ENCODE measurements at regions of chr7 and their contacts with region 1.

Region 1: GRCh38 chr7:80392229-80393169 is 119.4 kb downstream of the GNAT3 start:
- DNase-seq: peak; percentile 60
- ATAC-seq: peak; percentile 53; the same call in 1 of the 2 replicates
- H3K4me3 ChIP-seq: no peak overlapping the region
- H3K27ac ChIP-seq: no peak overlapping the region
- H3K4me1 ChIP-seq: no peaks in the 10 kb centered on the region
- H3K27me3 ChIP-seq: no peaks in the 10 kb centered on the region
- CTCF ChIP-seq: peak; percentile 59
- POLR2A ChIP-seq: no peak
- RAD21 ChIP-seq: peak; percentile 70

Region 2: GRCh38 chr7:80060218-80060806 is 332.2 kb before region 1 on chr7:
- CTCF ChIA-PET with region 1: no interaction called
- POLR2A ChIA-PET with region 1: no interaction called
- dilution Hi-C with region 1: no loop called
- in situ Hi-C with region 1: loop called (anchors 5 kb)
- intact Hi-C with region 1: loop called (anchors 2 kb)
- DNase-seq: peak; percentile 82
- ATAC-seq: peak; percentile 59; the same call in 1 of the 2 replicates
- H3K4me3 ChIP-seq: no peak overlapping the region
- H3K27ac ChIP-seq: no peak overlapping the region
- H3K4me1 ChIP-seq: peaks cover 2% of the 10 kb centered on the region; the same call in 1 of the 2 replicates
- H3K27me3 ChIP-seq: no peaks in the 10 kb centered on the region
- CTCF ChIP-seq: peak; percentile 65
- POLR2A ChIP-seq: no peak
- RAD21 ChIP-seq: peak; percentile 60

Region 3: GRCh38 chr7:80095545-80095944 is 297.0 kb before region 1 on chr7:
- CTCF ChIA-PET with region 1: no interaction called
- POLR2A ChIA-PET with region 1: no interaction called
- dilution Hi-C with region 1: no loop called
- in situ Hi-C with region 1: no loop called
- intact Hi-C with region 1: loop called (anchors 1 kb)
- DNase-seq: peak; percentile 29
- ATAC-seq: no peak; the same call in 1 of the 2 replicates
- H3K4me3 ChIP-seq: no peak overlapping the region
- H3K27ac ChIP-seq: no peak overlapping the region
- H3K4me1 ChIP-seq: no peaks in the 10 kb centered on the region; the same call in 1 of the 2 replicates
- H3K27me3 ChIP-seq: no peaks in the 10 kb centered on the region
- CTCF ChIP-seq: peak; percentile 56
- POLR2A ChIP-seq: no peak
- RAD21 ChIP-seq: peak; percentile 44

Region 4: GRCh38 chr7:80225361-80225760 is 167.1 kb before region 1 on chr7:
- CTCF ChIA-PET with region 1: no interaction called
- POLR2A ChIA-PET with region 1: no interaction called
- dilution Hi-C with region 1: no loop called
- in situ Hi-C with region 1: no loop called
- intact Hi-C with region 1: loop called (anchors 5 kb)
- DNase-seq: no peak
- ATAC-seq: no peak; the same call in 1 of the 2 replicates
- H3K4me3 ChIP-seq: no peak overlapping the region
- H3K27ac ChIP-seq: no peak overlapping the region
- H3K4me1 ChIP-seq: no peaks in the 10 kb centered on the region; the same call in 1 of the 2 replicates
- H3K27me3 ChIP-seq: no peaks in the 10 kb centered on the region
- CTCF ChIP-seq: no peak
- POLR2A ChIP-seq: no peak
- RAD21 ChIP-seq: no peak

Region 5: DNA sequence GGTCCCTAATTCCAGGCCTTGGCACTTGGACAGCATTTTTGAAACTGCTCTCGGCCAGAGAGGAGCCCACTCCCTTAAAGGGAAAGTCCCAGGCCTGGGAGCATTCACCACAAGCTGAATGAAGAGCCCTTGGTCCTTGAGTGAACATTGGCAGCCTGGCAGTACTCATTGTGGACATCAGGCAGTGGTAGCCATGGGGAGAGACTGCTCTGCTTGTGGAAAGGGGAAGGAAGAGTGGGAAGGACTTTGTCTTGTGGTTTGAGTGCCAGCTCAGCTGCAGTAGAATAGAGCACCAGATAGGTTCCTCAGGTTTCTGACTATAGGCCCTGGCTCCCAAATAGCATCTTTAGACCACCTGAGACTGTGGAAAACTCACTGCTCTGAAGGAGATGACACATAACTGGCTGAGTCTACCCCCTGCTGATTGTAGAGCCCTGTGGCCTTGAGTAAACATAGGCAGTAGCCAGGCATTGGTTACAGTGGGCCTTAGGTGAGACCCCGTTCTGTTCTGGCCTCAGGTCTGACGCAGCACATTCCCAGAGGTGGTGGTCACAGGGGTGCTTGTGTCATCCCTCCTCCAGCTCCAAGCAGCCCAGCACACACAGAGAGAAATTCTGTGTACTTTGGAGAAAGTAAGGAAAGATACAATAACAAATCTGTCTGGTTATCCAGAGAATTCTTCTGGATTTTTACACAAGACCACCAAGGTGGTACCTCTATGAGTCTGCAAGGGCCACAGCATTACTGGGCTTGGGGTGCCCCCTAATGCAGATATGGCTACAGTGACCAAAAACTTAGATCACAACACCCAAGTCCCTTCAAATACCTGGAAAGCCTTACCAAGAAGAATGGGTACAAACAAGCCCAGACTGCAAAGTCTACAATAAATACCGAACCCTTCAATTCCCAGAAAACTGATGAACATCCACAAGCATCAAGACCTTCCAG is 104.0 kb before region 1 on chr7:
- CTCF ChIA-PET with region 1: no interaction called
- POLR2A ChIA-PET with region 1: no interaction called
- dilution Hi-C with region 1: no loop called
- in situ Hi-C with region 1: no loop called
- intact Hi-C with region 1: loop called (anchors 5 kb)
- DNase-seq: peak; percentile 84
- ATAC-seq: peak; percentile 65
- H3K4me3 ChIP-seq: no peak overlapping the region
- H3K27ac ChIP-seq: no peak overlapping the region
- H3K4me1 ChIP-seq: no peaks in the 10 kb centered on the region
- H3K27me3 ChIP-seq: no peaks in the 10 kb centered on the region; the same call in 1 of the 2 replicates
- CTCF ChIP-seq: peak; percentile 29; the same call in 1 of the 2 replicates
- POLR2A ChIP-seq: no peak
- RAD21 ChIP-seq: no peak

Region 6: DNA sequence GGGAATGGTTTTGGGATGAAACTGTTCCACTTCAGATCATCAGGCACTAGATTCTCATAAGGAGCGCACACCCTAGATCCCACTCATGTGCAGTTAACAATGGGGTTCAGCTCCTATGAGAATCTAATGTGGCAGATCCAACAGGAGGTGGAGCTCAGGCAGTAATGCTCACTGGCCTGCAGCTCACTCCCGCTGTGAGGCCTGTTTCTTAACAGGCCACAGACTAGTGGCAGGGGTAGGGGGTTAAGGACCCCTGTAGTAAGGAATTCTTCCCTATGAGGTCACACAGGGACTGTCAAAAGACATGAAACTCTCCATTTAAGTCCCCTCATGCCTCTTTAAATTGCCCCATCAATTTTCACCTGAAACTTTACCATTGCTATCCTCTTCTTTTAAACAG is 1369.3 kb after region 1 on chr7:
- CTCF ChIA-PET with region 1: no interaction called
- POLR2A ChIA-PET with region 1: interaction called, 10 read pairs
- dilution Hi-C with region 1: no loop called
- in situ Hi-C with region 1: no loop called
- intact Hi-C with region 1: no loop called
- DNase-seq: no peak
- ATAC-seq: no peak
- H3K4me3 ChIP-seq: no peak overlapping the region
- H3K27ac ChIP-seq: no peak overlapping the region
- H3K4me1 ChIP-seq: peaks cover 2% of the 10 kb centered on the region
- H3K27me3 ChIP-seq: no peaks in the 10 kb centered on the region
- CTCF ChIP-seq: no peak
- POLR2A ChIP-seq: no peak
- RAD21 ChIP-seq: no peak

Measured in IMR-90 (cell line).